RWPE1 (cell line): ENCODE measurements at regions of chr3 and their contacts with region 1.

Region 1: DNA sequence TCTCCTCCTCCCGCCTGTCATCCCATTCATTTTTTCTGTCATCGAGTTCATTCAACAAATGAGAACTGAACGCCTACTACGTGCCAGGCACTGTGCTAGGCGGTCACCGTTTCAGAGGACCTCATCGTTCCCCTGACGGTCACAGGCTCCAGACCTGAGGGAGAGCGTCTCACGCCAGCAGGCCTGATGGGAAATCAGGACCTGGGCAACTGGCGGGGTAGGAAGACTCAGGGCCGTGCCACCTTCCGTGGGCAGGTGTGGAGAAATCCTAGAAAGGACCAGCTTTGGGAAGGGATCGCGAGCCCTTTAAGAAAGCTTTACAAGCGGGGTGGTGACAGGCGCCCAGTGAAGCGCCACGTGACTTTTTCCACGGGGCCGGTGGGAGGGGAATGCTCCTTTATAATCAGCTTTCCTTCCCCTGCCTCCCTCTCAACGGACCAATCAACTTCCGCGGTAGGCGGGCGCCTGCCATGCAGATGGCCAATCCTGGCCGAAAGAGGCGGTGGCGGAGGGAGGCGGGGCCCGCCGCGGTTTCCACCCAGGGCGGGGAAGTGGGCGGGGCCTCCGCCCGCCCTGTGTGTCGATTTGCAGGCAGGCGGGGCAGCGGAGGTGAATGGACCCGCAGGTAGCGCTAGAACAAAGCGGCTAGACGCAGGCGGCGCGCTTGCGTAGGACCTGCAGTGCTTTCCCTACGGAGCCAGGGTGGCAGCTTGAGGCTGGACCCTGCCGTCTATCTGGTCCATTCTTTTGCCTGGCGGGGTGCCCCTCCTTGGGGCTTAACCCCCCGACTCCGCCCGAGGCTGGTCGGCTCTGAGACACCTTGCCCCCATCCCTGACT is 816 bp upstream of the DUSP7 start:
- DNase-seq: peak; percentile 96
- H3K27ac ChIP-seq: peak overlapping the region; percentile 100
- CTCF ChIP-seq: no peak

Region 2: GRCh38 chr3:51891242-51892039 is 165.7 kb before region 1 on chr3:
- CTCF ChIA-PET with region 1: no interaction called
- POLR2A ChIA-PET with region 1: no interaction called
- DNase-seq: no peak
- H3K27ac ChIP-seq: no peak overlapping the region
- CTCF ChIP-seq: no peak

Region 3: GRCh38 chr3:52001443-52001974 is 55.7 kb before region 1 on chr3:
- CTCF ChIA-PET with region 1: interaction called, 12 read pairs
- POLR2A ChIA-PET with region 1: interaction called, 3 read pairs
- DNase-seq: peak; percentile 81
- H3K27ac ChIP-seq: peak overlapping the region; percentile 58
- CTCF ChIP-seq: peak; percentile 95

Region 4: DNA sequence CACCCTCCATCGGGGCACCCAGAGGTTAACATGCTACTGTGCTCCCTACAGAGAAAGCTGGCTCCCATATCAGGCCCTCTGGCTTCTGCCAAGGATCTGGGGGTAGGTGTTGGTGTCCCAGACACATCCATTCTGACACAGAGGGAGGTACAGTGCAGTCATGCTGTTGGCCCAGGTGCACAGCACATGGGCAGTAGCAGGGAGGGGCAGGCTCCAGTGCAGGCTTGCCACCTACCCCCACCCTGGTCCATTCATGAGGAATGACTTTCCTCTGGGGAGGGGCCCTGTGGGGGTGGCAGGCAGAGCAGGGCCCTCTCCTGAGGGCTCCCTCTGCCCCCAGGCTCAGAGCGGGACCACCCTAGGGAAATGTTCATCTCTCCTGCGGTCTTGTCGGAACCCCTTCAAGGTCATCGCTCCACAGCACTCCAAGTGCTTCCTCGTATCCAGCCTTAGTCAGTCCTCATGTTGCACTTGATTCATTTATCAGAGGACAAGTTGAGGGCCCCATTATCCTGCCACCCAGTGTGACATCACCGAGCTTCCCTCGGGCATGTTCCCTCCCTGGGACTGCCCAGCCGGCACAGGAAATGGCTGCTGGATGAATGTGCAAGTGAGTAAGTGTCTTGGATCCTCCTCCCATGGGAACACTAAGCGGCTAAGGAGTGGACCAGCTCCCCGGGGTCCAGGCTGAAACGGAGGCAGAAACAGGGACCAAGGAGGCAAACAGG is 10.8 kb before region 1 on chr3:
- CTCF ChIA-PET with region 1: no interaction called
- POLR2A ChIA-PET with region 1: interaction called, 12 read pairs
- DNase-seq: peak; percentile 87
- H3K27ac ChIP-seq: peak overlapping the region; percentile 100
- CTCF ChIP-seq: no peak

Region 5: DNA sequence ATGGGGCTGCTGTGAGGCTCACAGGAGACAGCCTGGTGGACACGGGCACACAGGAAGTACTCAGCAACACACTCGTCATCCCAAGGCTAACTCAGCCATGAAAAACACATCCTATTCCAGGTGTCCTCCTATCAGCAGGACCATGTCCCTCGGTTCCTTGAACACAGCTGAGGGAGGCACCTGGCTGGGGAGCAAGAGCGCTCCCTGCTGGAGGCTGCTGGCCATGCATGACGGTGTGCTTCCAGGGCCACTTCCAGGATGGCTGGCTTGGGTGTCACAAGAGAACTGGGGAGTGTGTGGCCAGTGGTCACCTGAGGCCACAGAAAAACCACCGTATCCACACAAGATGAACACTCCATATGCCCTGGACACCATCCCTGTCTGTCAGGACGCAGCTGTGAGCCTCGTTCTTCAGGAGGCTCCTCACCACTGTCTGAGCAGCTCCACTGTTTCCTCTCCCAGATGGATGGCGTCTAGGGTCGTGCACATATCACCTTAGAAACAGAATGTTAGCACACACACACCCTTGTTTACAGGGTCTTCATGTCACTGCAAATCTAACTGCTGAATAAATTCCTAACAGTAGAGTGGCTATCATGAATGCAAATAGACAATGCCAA is 66.0 kb after region 1 on chr3:
- CTCF ChIA-PET with region 1: interaction called, 11 read pairs
- POLR2A ChIA-PET with region 1: no interaction called
- DNase-seq: peak; percentile 55
- H3K27ac ChIP-seq: peak overlapping the region; percentile 35
- CTCF ChIP-seq: peak; percentile 83

Region 6: GRCh38 chr3:52310861-52311575 is 253.8 kb after region 1 on chr3:
- CTCF ChIA-PET with region 1: no interaction called
- POLR2A ChIA-PET with region 1: no interaction called
- DNase-seq: no peak
- H3K27ac ChIP-seq: no peak overlapping the region
- CTCF ChIP-seq: no peak